Prostate gland (tissue), 2 donors: ENCODE measurements at regions of chr2 and their contacts with region 1.

Region 1: DNA sequence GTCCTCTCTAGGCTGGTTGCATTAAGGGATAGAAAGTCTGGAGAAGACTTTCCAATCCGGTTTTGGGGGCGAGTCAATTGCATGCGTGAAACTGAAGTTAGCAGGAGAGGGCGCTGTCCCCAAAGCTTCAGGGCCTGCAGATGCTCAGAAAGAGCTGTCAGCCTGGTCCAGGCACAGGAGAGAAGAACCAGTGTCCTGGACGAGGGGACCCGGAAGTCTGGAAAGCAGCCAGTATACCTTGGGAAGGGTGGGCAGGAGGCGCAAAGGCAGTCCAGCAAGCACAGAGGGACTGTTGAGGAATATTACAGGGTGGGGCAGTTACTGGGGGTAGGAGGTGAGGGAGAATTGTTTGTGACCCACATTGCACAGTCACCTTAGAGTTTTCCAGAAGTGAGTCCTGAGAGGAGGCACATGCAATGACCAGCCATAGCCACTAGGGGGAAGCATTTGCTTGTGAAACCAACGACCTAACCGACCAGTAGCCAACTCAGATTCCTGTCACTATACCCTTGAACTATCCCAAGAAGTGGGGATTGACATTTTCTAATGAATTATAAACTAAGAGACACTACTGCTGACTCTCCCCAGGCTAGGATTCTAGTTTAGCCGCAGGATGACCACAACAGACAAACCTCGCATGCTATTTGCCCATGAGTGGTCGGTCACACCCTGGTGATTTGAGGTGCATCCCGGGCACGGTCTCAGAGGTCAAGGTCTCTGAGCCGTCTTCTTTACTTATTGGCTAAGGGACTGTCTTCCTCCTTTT is 172.8 kb downstream of the RDH14 start:
- DNase-seq: peak; percentile 61
- H3K4me3 ChIP-seq: no peak overlapping the region
- H3K27ac ChIP-seq: no peak overlapping the region
- H3K4me1 ChIP-seq: no peaks in the 10 kb centered on the region
- H3K27me3 ChIP-seq: no peaks in the 10 kb centered on the region
- CTCF ChIP-seq: peak; percentile 77 to 98 (median 86)
- POLR2A ChIP-seq: no peak

Region 2: GRCh38 chr2:18311420-18312195 is 76.0 kb before region 1 on chr2:
- intact Hi-C with region 1: no loop called
- DNase-seq: peak; percentile 4
- H3K4me3 ChIP-seq: no peak overlapping the region
- H3K27ac ChIP-seq: no peak overlapping the region
- H3K4me1 ChIP-seq: peaks cover 5% of the 10 kb centered on the region
- H3K27me3 ChIP-seq: no peaks in the 10 kb centered on the region
- CTCF ChIP-seq: no peak
- POLR2A ChIP-seq: no peak

Region 3: DNA sequence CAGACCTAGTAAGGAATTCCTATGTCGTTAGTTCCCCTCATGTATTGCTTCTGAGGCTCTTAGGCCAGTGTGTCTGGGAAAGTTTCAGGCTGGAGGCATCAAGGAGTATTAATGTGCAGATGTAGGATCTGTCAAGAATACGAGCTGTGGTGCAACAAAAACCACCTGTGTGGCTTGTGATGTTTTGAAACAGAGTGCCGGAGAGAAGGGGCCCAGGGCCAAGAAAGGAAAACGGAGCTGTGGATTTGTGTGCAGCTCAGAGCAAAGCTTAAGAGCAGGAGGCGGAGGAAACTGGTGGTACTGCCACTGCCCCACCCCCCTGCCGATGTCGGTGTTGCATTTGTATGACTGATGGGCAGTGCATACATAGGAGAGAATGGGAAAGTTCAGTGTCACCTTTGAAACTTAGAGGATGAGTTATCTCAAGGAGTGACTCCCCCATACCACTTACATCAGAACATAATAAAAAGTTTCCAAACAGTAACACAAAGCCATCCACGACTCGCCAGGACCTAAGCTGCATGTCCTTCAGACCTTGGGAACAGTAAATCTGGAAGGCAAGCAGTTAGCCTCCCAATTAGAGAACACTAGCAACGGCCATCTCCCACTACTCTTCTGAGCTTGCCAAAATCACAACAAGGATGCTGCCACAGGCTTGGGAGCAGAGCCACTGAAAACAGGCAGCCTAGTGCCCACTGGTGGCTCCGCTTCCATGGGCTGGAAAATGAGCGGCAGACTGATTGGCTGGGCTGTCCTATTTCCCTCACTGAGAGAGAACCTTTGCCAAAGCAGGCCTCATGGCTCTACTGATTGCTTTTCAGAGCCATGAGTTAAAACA is 354.5 kb after region 1 on chr2:
- intact Hi-C with region 1: loop called (anchors 5 kb)
- DNase-seq: no peak
- H3K4me3 ChIP-seq: no peak overlapping the region
- H3K27ac ChIP-seq: no peak overlapping the region
- H3K4me1 ChIP-seq: no peaks in the 10 kb centered on the region
- H3K27me3 ChIP-seq: no peaks in the 10 kb centered on the region
- CTCF ChIP-seq: no peak
- POLR2A ChIP-seq: no peak

Region 4: GRCh38 chr2:19868705-19869580 is 1481.3 kb after region 1 on chr2:
- intact Hi-C with region 1: loop called (anchors 5 kb)
- DNase-seq: no peak
- H3K4me3 ChIP-seq: peak overlapping the region; percentile 31 to 36
- H3K27ac ChIP-seq: no peak overlapping the region
- H3K4me1 ChIP-seq: no peaks in the 10 kb centered on the region
- H3K27me3 ChIP-seq: no peaks in the 10 kb centered on the region
- CTCF ChIP-seq: no peak
- POLR2A ChIP-seq: no peak

Region 5: GRCh38 chr2:19971691-19972090 is 1584.1 kb after region 1 on chr2:
- intact Hi-C with region 1: no loop called
- DNase-seq: no peak
- H3K4me3 ChIP-seq: no peak overlapping the region
- H3K27ac ChIP-seq: no peak overlapping the region
- H3K4me1 ChIP-seq: no peaks in the 10 kb centered on the region
- H3K27me3 ChIP-seq: no peaks in the 10 kb centered on the region
- CTCF ChIP-seq: no peak
- POLR2A ChIP-seq: no peak